ENCODE measurements at regions of chr12 and their contacts with region 1.

Region 1: GRCh38 chr12:18861287-18861858 is 123.5 kb downstream of the CAPZA3 start:
- DNase-seq: no peak
- ATAC-seq: no peak
- H3K4me3 ChIP-seq: no peak overlapping the region
- H3K27ac ChIP-seq: no peak overlapping the region
- H3K4me1 ChIP-seq: no peaks in the 10 kb centered on the region
- H3K27me3 ChIP-seq: no peaks in the 10 kb centered on the region
- CTCF ChIP-seq: peak in 6 of 7 experiments; percentile 30 to 63 (median 58)
- POLR2A ChIP-seq: no peak

Region 2: DNA sequence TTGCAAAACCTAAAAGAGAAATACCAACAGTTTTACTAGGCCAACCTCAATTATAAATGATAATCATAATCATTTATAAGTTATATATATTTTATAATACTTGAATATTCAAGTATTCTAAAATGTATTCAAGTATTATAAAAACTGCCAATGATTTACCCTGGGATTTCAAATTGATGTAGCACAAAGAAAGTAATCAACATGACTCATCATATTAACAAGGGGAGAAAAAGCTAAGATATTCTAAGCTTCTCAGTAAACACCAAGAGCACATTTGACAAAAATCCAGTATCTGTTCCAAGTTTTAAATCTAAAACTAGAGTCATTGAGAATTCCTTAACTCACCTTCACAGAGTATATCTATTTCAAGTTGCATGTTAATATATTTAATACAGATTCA is 67.4 kb before region 1 on chr12:
- intact Hi-C with region 1: no loop called
- DNase-seq: no peak
- ATAC-seq: no peak
- H3K4me3 ChIP-seq: no peak overlapping the region
- H3K27ac ChIP-seq: no peak overlapping the region
- H3K4me1 ChIP-seq: peaks cover 17% of the 10 kb centered on the region
- H3K27me3 ChIP-seq: no peaks in the 10 kb centered on the region
- CTCF ChIP-seq: no peak
- POLR2A ChIP-seq: no peak

Region 3: DNA sequence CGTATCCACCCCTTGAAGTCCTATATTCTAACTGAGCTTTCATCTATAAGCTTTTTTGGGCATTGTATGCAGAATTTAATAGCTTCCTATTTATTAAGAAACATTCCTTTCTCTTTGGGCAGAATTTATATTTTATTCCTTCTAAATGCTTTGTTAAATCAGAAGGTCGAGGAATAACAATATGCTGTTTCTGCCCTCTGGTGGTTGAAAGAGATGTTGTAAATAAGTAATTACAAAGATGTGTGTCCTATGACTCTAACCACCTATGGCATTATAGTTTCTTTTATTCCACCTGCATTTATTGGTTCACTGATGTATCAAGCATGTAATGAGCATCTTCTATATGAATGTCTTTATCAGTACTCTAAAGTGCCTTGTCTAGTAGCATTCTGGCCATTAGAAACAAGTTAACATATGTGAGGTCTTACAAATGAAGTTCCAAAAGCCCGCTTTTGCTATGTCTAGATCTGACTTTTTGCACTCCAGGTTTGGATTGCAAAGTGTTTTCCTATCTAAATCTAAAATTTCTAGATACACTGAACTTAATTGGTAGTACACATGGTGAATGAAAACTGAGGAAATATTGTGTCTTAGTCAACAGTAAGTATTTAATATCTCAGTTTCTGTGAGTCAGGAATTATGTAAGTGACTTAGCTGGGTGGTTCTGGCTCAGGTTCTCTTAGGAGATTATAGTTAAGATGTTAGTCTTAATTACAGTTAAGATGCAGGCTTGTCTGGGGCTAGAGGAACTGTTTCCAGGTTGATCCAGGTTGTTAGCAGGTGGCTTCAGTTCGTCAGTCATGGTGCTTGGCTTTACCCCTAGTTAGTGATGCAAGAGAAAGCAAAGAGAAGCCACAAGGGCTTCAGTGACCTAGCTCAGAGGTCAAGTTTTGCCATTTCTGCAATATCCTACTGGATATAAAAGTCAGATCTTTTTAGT is 325.6 kb after region 1 on chr12:
- intact Hi-C with region 1: loop called (anchors 5 kb)
- DNase-seq: peak in 1 of 4 donors; percentile 13
- ATAC-seq: peak; percentile 62
- H3K4me3 ChIP-seq: no peak overlapping the region
- H3K27ac ChIP-seq: no peak overlapping the region
- H3K4me1 ChIP-seq: peaks cover 14% of the 10 kb centered on the region
- H3K27me3 ChIP-seq: no peaks in the 10 kb centered on the region
- CTCF ChIP-seq: peak; percentile 27 to 77 (median 66)
- POLR2A ChIP-seq: no peak